Common myeloid progenitor, CD34-positive (primary cell): ENCODE measurements at regions of chr11 and their contacts with region 1.

Region 1: DNA sequence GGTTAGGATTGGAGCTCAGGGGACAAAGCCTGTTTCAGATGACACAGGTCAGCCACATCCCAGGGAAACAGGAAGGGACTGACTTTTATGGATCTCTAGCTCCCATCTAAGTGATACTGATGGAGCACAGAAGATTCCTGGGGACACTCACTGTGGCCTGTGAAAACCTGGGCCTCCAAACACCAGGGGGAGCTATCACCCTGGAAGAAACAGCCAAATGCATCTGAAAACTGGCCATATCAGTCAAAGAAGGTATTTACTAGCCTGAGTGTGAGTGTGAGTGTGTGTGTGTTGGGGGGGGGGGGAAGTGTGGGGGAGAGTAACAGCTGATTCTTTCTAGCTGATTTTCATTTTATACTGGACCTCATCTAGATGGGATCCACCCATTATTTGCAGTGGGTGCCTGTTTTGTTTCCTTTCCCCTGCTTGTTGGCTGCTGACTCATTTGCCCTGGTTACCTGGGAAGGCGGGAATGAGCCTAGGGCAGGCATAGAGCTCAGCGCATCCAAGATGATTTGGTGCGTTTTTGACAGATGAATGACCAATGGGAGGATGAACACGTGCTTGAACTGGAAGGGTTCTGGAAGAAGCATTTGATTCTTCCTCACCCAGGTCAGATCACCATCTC is 284.0 kb downstream of the KIRREL3 start:
- DNase-seq: peak; percentile 29 to 65 (median 48)
- H3K4me3 ChIP-seq: no peak overlapping the region
- H3K27ac ChIP-seq: no peak overlapping the region
- H3K4me1 ChIP-seq: peaks cover 0 to 7% (median 2%) of the 10 kb centered on the region in 4 experiments
- H3K27me3 ChIP-seq: peaks cover 0 to 60% (median 19%) of the 10 kb centered on the region in 5 experiments

Region 2: GRCh38 chr11:126612671-126613070 is 103.9 kb before region 1 on chr11:
- CTCF ChIA-PET with region 1: no interaction called
- POLR2A ChIA-PET with region 1: no interaction called
- DNase-seq: no peak
- H3K4me3 ChIP-seq: no peak overlapping the region
- H3K27ac ChIP-seq: no peak overlapping the region
- H3K4me1 ChIP-seq: no peaks in the 10 kb centered on the region
- H3K27me3 ChIP-seq: peaks cover 0 to 16% (median 5%) of the 10 kb centered on the region in 5 experiments

Region 3: DNA sequence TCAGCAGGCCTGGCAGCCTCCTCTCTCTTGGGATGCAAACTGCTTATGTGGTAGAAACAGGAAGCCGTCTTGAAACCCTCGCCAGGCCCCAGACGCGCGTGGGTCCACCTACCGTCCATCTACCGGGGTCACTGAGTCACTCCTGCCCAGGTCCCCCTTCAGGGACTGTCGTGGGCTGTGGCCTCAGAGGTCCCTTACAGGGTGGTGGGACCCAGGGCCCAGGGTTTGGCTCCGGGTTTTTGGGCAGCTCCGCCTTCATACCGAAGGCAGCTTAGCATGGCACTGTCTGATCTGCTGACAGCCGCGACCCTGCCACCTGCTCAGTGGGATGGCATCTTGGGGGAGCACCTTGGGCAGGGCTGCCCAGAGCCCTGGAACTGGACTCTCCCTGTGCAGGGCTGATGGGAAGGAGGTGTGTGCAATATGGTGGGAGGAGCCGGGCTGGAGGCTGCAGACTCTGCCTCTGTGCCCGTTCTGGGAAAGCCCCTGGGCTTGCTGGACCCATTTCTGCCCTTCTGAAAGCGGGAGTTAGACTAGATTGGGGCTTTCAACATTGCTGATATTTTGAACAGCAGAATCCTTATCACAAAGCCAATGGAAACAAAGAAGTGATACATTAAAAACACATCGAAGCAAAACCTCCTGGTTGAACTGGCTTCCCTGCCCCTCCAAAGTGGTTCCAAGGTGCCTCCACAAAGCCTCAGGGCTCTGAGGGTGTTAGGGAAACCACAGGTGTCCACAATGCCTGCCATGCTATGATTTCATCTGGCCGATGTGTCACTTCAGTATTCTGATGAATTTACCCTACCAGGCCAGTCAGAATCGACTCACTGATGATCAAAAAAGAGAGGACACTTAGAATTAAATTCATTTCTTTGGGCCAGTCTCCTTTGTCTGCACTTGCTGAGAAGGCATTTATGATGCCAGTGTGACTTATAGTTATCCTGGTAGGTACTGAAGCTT is 32.5 kb before region 1 on chr11:
- CTCF ChIA-PET with region 1: no interaction called
- POLR2A ChIA-PET with region 1: no interaction called
- DNase-seq: no peak
- H3K4me3 ChIP-seq: no peak overlapping the region
- H3K27ac ChIP-seq: no peak overlapping the region
- H3K4me1 ChIP-seq: no peaks in the 10 kb centered on the region
- H3K27me3 ChIP-seq: peaks cover 0 to 44% (median 8%) of the 10 kb centered on the region in 5 experiments

Region 4: GRCh38 chr11:126989942-126990715 is 273.6 kb after region 1 on chr11:
- CTCF ChIA-PET with region 1: interaction called, 13 read pairs
- POLR2A ChIA-PET with region 1: no interaction called
- DNase-seq: peak; percentile 44 to 62 (median 50)
- H3K4me3 ChIP-seq: no peak overlapping the region
- H3K27ac ChIP-seq: no peak overlapping the region
- H3K4me1 ChIP-seq: peaks cover 0 to 2% (median 0%) of the 10 kb centered on the region in 4 experiments
- H3K27me3 ChIP-seq: peaks cover 0 to 64% (median 20%) of the 10 kb centered on the region in 5 experiments